Activated CD4-positive, alpha-beta memory T cell treated with anti-CD3 and anti-CD28 coated beads for 36 hours (primary cell): ENCODE measurements at regions of chr6 and their contacts with region 1.

Region 1: DNA sequence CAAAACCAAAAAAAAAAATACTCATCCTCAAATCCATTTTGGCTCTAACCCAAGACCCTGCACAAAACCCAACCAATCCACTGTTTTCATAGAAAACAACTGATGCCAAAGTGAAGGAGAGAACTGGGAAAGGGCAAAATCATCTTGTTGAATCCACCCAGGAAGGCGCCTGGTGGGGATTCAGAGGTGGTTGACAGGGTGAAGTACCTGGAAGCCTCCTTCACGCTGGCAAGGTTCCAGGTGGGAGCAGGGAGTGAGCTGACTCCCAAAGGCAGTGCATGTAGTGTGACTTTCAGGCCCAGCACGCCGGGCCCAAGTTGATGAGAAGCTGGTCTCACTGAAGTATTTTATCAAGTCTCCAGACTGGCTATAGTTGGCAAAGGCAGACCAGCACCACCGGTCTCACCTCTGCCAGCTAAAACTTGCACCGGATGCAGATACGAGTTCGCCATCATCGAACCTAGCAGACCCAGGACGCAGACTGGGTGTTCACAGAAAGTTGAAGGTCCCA is 16.5 kb downstream of the PPP1R10 start:
- DNase-seq: no peak
- H3K4me3 Mint-ChIP-seq: no peak overlapping the region
- H3K27ac Mint-ChIP-seq: no peak overlapping the region
- H3K4me1 Mint-ChIP-seq: peaks cover 14% of the 10 kb centered on the region
- H3K27me3 Mint-ChIP-seq: no peaks in the 10 kb centered on the region

Region 2: GRCh38 chr6:30483677-30484279 is 116.7 kb before region 1 on chr6:
- CTCF ChIA-PET with region 1: interaction called, 98 read pairs
- POLR2A ChIA-PET with region 1: interaction called, 4 read pairs
- intact Hi-C with region 1: loop called (anchors 1 kb)
- DNase-seq: no peak
- H3K4me3 Mint-ChIP-seq: no peak overlapping the region
- H3K27ac Mint-ChIP-seq: no peak overlapping the region
- H3K4me1 Mint-ChIP-seq: peaks cover 34% of the 10 kb centered on the region
- H3K27me3 Mint-ChIP-seq: peaks cover 29% of the 10 kb centered on the region

Region 3: GRCh38 chr6:30578051-30578450 is 22.5 kb before region 1 on chr6:
- CTCF ChIA-PET with region 1: interaction called, 11 read pairs
- POLR2A ChIA-PET with region 1: interaction called, 11 read pairs
- intact Hi-C with region 1: no loop called
- DNase-seq: no peak
- H3K4me3 Mint-ChIP-seq: no peak overlapping the region
- H3K27ac Mint-ChIP-seq: no peak overlapping the region
- H3K4me1 Mint-ChIP-seq: peaks cover 30% of the 10 kb centered on the region
- H3K27me3 Mint-ChIP-seq: no peaks in the 10 kb centered on the region

Region 4: DNA sequence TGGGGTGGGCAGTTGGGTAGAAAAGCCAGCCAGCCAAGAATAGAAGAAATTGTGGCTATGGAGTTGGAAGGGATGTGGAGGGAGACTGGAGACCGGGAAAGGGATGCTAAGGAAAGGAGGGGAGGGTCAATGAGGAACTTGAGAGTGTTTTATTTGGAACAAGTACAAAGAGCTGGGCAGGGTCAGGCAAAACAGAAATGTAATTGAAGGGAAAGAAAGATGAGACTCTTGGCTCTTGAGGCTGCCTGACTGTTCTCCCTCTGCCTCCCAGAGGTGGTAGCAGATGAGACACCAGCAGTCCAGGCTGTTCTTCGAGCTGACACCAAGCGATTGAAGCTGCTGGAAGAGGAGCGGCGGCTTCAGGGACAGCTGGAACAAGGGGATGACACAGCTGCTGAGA is 16.6 kb before region 1 on chr6:
- CTCF ChIA-PET with region 1: interaction called, 19 read pairs
- POLR2A ChIA-PET with region 1: interaction called, 11 read pairs
- intact Hi-C with region 1: no loop called
- DNase-seq: no peak
- H3K4me3 Mint-ChIP-seq: no peak overlapping the region
- H3K27ac Mint-ChIP-seq: no peak overlapping the region
- H3K4me1 Mint-ChIP-seq: no peaks in the 10 kb centered on the region
- H3K27me3 Mint-ChIP-seq: no peaks in the 10 kb centered on the region

Region 5: GRCh38 chr6:30741789-30742315 is 141.3 kb after region 1 on chr6:
- CTCF ChIA-PET with region 1: no interaction called
- POLR2A ChIA-PET with region 1: no interaction called
- intact Hi-C with region 1: no loop called
- DNase-seq: no peak
- H3K4me3 Mint-ChIP-seq: peak overlapping the region; percentile 99
- H3K27ac Mint-ChIP-seq: peak overlapping the region; percentile 97
- H3K4me1 Mint-ChIP-seq: peaks cover 65% of the 10 kb centered on the region
- H3K27me3 Mint-ChIP-seq: no peaks in the 10 kb centered on the region